Activated CD4-positive, alpha-beta memory T cell treated with anti-CD3 and anti-CD28 coated beads, Interleukin-2, amount 10 ng/mL, durations not matched to agents 7 days and 5 days (primary cell): ENCODE measurements at regions of chr15 and their contacts with region 1.

Region 1: GRCh38 chr15:31265871-31266711 is 60.5 kb upstream of the KLF13 start:
- DNase-seq: peak; percentile 82
- H3K4me3 Mint-ChIP-seq: peak overlapping the region; percentile 22
- H3K27ac Mint-ChIP-seq: peak overlapping the region; percentile 89
- H3K4me1 Mint-ChIP-seq: peaks cover 84% of the 10 kb centered on the region
- H3K27me3 Mint-ChIP-seq: peaks cover 8% of the 10 kb centered on the region

Region 2: GRCh38 chr15:31254431-31255175 is 11.5 kb before region 1 on chr15:
- CTCF ChIA-PET with region 1: no interaction called
- POLR2A ChIA-PET with region 1: interaction called, 11 read pairs
- DNase-seq: no peak
- H3K4me3 Mint-ChIP-seq: no peak overlapping the region
- H3K27ac Mint-ChIP-seq: no peak overlapping the region
- H3K4me1 Mint-ChIP-seq: peaks cover 34% of the 10 kb centered on the region
- H3K27me3 Mint-ChIP-seq: peaks cover 14% of the 10 kb centered on the region